B cell (primary cell): ENCODE measurements at regions of chr15 and their contacts with region 1.

Region 1: DNA sequence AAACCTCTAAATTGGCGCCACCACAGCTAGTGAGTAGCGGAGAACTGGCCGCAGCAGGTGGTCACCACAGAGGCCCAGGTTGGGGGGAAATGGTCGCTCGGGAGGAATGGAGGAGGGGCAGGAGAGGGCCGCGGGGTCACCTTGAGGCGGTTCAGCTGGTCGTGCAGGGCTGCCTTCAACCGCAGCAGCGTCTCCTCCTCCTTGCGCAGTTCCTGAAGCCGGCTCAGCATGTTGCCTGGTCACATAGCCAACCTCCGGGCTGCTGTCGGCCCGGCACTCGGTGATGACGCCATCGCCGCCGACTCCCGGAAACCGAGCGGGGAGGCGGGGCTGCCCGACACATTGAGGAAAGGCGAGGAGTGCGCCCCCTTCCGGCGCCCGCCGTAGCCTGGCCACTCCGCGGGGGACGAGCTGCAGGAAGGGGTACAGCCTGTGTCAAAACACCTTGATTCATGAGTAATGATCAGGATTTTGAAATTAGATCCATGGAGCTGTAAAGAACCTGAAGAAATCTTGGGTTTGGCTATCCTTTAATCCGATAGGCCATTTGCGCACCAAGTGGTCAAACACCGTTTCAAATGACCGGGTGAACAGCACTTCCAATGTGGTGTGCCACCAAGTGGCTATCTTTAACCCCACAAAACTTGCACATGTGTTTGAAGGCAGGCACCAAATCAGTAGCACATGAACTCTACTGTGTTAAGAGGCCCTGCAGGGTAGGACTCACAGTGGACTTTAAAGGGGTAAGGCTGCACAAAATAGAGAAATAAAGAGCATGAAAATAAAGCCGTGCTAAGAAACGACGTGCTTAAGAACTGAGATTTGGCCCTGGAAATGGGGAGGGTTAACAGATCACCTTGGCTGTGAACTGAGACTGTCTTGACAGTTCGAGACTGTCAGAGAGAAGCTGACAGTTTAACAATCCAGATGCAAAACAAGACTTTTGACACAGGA is at the start of gene SNAPC5:
- DNase-seq: peak; percentile 97
- ATAC-seq: peak; percentile 93
- H3K4me3 ChIP-seq: peak within 1 kb of the TSS; percentile 88 to 94 (median 89)
- H3K4me3 Mint-ChIP-seq: peak within 1 kb of the TSS; percentile 94
- H3K27ac ChIP-seq: peak within 1 kb of the TSS; percentile 95 to 96
- H3K27ac Mint-ChIP-seq: peak within 1 kb of the TSS; percentile 93
- H3K4me1 ChIP-seq: peaks cover 17 to 27% of the 10 kb centered on the region in 2 donors
- H3K4me1 Mint-ChIP-seq: peaks cover 33% of the 10 kb centered on the region
- H3K27me3 ChIP-seq: no peaks in the 10 kb centered on the region
- H3K27me3 Mint-ChIP-seq: no peaks in the 10 kb centered on the region
- CTCF ChIP-seq: peak; percentile 99
- total RNA-seq, gene SNAPC5: 28.5 and 29.9 TPM in 2 replicates

Region 2: DNA sequence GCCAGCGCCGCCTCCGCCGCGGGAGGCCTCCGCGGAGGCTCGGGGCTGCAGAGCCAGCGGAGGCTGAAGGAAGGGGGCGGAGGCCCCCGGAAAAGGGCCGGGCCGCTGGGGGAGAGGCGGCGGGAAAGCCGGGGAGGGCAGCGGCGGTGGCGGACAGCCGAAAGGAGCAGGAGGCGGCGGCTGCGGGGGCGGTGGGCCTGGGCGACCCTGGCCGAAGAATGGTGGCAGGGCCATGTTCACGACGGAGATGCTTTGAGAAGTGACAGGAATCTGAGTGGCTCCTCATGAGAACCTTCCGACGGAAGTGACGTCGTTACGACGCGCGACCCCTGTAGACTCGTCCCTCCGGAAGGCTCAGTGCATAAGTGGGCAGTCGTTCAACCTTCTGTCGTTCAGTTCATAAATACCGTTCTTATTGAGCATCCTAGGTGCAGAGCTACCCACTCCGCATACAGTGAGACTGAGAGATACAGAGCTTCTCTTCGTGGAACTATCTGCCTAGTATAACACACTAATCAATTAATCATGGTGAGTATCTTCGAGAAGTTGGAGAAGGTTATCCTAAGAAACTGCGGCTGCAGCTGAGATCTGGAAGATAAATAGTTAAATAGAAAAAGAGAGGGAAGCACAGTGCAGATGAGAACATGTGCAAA is 1364.1 kb before region 1 on chr15 and contains the start of gene PDCD7:
- CTCF ChIA-PET with region 1: no interaction called
- POLR2A ChIA-PET with region 1: no interaction called
- intact Hi-C with region 1: loop called (anchors 5 kb)
- DNase-seq: peak; percentile 92
- ATAC-seq: peak; percentile 93
- H3K4me3 ChIP-seq: peak within 1 kb of the TSS; percentile 55 to 90 (median 67)
- H3K4me3 Mint-ChIP-seq: peak within 1 kb of the TSS; percentile 93
- H3K27ac ChIP-seq: peak within 1 kb of the TSS; percentile 53 to 88
- H3K27ac Mint-ChIP-seq: peak within 1 kb of the TSS; percentile 95
- H3K4me1 ChIP-seq: peaks cover 13 to 19% of the 10 kb centered on the region in 2 donors
- H3K4me1 Mint-ChIP-seq: peaks cover 28% of the 10 kb centered on the region
- H3K27me3 ChIP-seq: no peaks in the 10 kb centered on the region
- H3K27me3 Mint-ChIP-seq: no peaks in the 10 kb centered on the region
- CTCF ChIP-seq: no peak
- total RNA-seq, gene PDCD7: 43.2 and 47.0 TPM in 2 replicates

Region 3: DNA sequence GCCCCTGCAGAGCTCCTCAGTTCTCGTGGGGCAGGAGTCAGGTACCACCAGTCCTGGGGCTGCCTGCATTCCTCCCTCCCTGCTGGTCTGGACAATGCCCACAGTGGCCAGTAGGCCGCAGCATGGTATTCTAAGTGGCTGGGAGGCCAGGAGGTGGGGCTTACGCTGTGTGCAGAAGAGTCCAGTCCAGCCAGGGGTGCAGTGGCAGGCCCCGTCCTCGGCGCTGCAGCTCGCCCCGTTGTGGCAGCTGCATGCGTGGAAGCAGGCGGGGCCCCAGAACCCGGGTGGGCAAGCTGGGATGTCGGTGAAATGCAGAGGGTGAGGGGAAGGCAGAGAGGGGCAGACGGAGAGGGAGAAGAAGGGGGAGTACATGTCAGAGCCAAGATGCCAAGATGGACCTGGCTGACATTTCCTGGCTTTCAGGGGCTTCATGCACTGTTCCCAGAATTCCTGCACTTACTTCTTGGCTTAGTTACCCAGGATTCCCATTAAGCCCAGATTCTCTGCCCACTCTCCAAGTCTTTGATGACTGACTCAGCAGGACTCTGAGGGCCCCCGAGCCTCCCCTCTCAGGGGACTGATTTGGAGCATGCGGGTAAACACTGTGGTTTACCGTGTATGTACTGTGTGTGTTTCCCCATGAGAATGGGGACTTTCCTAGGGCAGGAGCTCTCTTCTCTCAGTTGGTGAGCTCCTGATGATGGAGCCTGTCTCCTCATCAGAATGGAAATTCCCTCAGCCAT is 580.9 kb before region 1 on chr15:
- CTCF ChIA-PET with region 1: no interaction called
- POLR2A ChIA-PET with region 1: no interaction called
- intact Hi-C with region 1: loop called (anchors 5 kb)
- DNase-seq: peak; percentile 86
- ATAC-seq: peak; percentile 89
- H3K4me3 ChIP-seq: peak overlapping the region in 1 of 5 experiments; percentile 17
- H3K4me3 Mint-ChIP-seq: peak overlapping the region; percentile 72
- H3K27ac ChIP-seq: peak overlapping the region in 1 of 2 donors; percentile 73
- H3K27ac Mint-ChIP-seq: peak overlapping the region; percentile 73
- H3K4me1 ChIP-seq: peaks cover 69 to 70% of the 10 kb centered on the region in 2 donors
- H3K4me1 Mint-ChIP-seq: peaks cover 70% of the 10 kb centered on the region
- H3K27me3 ChIP-seq: no peaks in the 10 kb centered on the region
- H3K27me3 Mint-ChIP-seq: no peaks in the 10 kb centered on the region
- CTCF ChIP-seq: no peak

Region 4: GRCh38 chr15:66287461-66288057 is 210.2 kb before region 1 on chr15:
- CTCF ChIA-PET with region 1: interaction called, 15 read pairs
- POLR2A ChIA-PET with region 1: no interaction called
- intact Hi-C with region 1: loop called (anchors 2 kb)
- DNase-seq: peak; percentile 57
- ATAC-seq: peak; percentile 51
- H3K4me3 ChIP-seq: no peak overlapping the region
- H3K4me3 Mint-ChIP-seq: no peak overlapping the region
- H3K27ac ChIP-seq: no peak overlapping the region
- H3K27ac Mint-ChIP-seq: no peak overlapping the region
- H3K4me1 ChIP-seq: peaks cover 6 to 8% of the 10 kb centered on the region in 2 donors
- H3K4me1 Mint-ChIP-seq: peaks cover 22% of the 10 kb centered on the region
- H3K27me3 ChIP-seq: no peaks in the 10 kb centered on the region
- H3K27me3 Mint-ChIP-seq: no peaks in the 10 kb centered on the region
- CTCF ChIP-seq: peak; percentile 85

Region 5: GRCh38 chr15:66356345-66357236 is 141.2 kb before region 1 on chr15 and contains the start of gene TIPIN:
- CTCF ChIA-PET with region 1: interaction called, 27 read pairs
- POLR2A ChIA-PET with region 1: interaction called, 3 read pairs
- intact Hi-C with region 1: loop called (anchors 1 kb)
- DNase-seq: peak; percentile 98
- ATAC-seq: peak; percentile 95
- H3K4me3 ChIP-seq: peak within 1 kb of the TSS; percentile 35 to 89 (median 84)
- H3K4me3 Mint-ChIP-seq: peak within 1 kb of the TSS; percentile 91
- H3K27ac ChIP-seq: peak within 1 kb of the TSS; percentile 58 to 71
- H3K27ac Mint-ChIP-seq: peak within 1 kb of the TSS; percentile 83
- H3K4me1 ChIP-seq: peaks cover 11 to 28% of the 10 kb centered on the region in 2 donors
- H3K4me1 Mint-ChIP-seq: peaks cover 24% of the 10 kb centered on the region
- H3K27me3 ChIP-seq: no peaks in the 10 kb centered on the region
- H3K27me3 Mint-ChIP-seq: no peaks in the 10 kb centered on the region
- CTCF ChIP-seq: no peak
- total RNA-seq, gene TIPIN: 8.8 and 8.9 TPM in 2 replicates

Region 6: GRCh38 chr15:66401130-66402021 is 96.4 kb before region 1 on chr15:
- CTCF ChIA-PET with region 1: interaction called, 20 read pairs
- POLR2A ChIA-PET with region 1: no interaction called
- intact Hi-C with region 1: no loop called
- DNase-seq: peak; percentile 10
- ATAC-seq: peak; percentile 39
- H3K4me3 ChIP-seq: peak overlapping the region in 2 of 5 experiments; percentile 15 to 17
- H3K4me3 Mint-ChIP-seq: peak overlapping the region; percentile 83
- H3K27ac ChIP-seq: no peak overlapping the region
- H3K27ac Mint-ChIP-seq: peak overlapping the region; percentile 50
- H3K4me1 ChIP-seq: peaks cover 36 to 46% of the 10 kb centered on the region in 2 donors
- H3K4me1 Mint-ChIP-seq: peaks cover 54% of the 10 kb centered on the region
- H3K27me3 ChIP-seq: no peaks in the 10 kb centered on the region
- H3K27me3 Mint-ChIP-seq: no peaks in the 10 kb centered on the region
- CTCF ChIP-seq: no peak

Region 7: GRCh38 chr15:66452971-66453580 is 44.7 kb before region 1 on chr15:
- CTCF ChIA-PET with region 1: no interaction called
- POLR2A ChIA-PET with region 1: no interaction called
- intact Hi-C with region 1: no loop called
- DNase-seq: no peak
- ATAC-seq: no peak
- H3K4me3 ChIP-seq: no peak overlapping the region
- H3K4me3 Mint-ChIP-seq: no peak overlapping the region
- H3K27ac ChIP-seq: no peak overlapping the region
- H3K27ac Mint-ChIP-seq: no peak overlapping the region
- H3K4me1 ChIP-seq: no peaks in the 10 kb centered on the region
- H3K4me1 Mint-ChIP-seq: peaks cover 11% of the 10 kb centered on the region
- H3K27me3 ChIP-seq: no peaks in the 10 kb centered on the region
- H3K27me3 Mint-ChIP-seq: no peaks in the 10 kb centered on the region
- CTCF ChIP-seq: no peak